MCF 10A (cell line): ENCODE measurements at regions of chr4 and their contacts with region 1.

Region 1: GRCh38 chr4:92172203-92172602 is 131.6 kb upstream of the GRID2 start:
- DNase-seq: peak; percentile 23
- H3K4me3 Mint-ChIP-seq: no peak overlapping the region
- H3K27ac Mint-ChIP-seq: no peak overlapping the region
- H3K4me1 Mint-ChIP-seq: no peaks in the 10 kb centered on the region
- H3K27me3 Mint-ChIP-seq: no peaks in the 10 kb centered on the region
- CTCF ChIP-seq: peak; percentile 26

Region 2: DNA sequence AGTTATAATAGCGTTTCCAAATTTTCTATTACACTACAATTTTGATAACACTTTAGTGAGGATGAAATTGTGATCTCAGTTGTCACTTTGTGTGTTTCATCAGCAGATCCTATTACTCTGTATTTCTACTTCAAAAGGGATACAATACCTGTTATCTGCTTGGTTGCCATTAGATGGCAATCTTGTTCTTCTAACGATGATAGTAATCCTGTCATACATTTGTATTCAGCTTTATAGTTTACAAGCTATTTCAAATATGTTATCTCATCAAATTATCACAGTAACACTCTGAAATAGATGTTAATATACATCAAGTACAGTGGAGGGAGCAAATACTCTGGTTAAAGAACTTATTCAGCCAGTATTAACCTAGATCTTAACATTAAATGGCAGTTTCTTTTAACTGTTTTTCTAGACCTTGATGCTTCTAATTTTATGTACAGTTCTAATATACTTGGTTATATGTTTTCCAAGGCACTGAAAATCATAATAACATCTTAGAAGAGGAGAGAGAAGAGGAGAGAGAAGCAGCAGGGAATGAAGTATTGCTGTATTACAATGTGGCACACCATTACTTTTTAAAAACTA is 1753.0 kb before region 1 on chr4:
- CTCF ChIA-PET with region 1: no interaction called
- POLR2A ChIA-PET with region 1: no interaction called
- intact Hi-C with region 1: loop called (anchors 10 kb)
- DNase-seq: peak; percentile 61
- H3K4me3 Mint-ChIP-seq: no peak overlapping the region
- H3K27ac Mint-ChIP-seq: no peak overlapping the region
- H3K4me1 Mint-ChIP-seq: no peaks in the 10 kb centered on the region
- H3K27me3 Mint-ChIP-seq: no peaks in the 10 kb centered on the region
- CTCF ChIP-seq: peak; percentile 56

Region 3: GRCh38 chr4:92387459-92388069 is 215.4 kb after region 1 on chr4:
- CTCF ChIA-PET with region 1: no interaction called
- POLR2A ChIA-PET with region 1: no interaction called
- intact Hi-C with region 1: loop called (anchors 2 kb)
- DNase-seq: peak; percentile 51
- H3K4me3 Mint-ChIP-seq: no peak overlapping the region
- H3K27ac Mint-ChIP-seq: no peak overlapping the region
- H3K4me1 Mint-ChIP-seq: no peaks in the 10 kb centered on the region
- H3K27me3 Mint-ChIP-seq: no peaks in the 10 kb centered on the region
- CTCF ChIP-seq: peak; percentile 33